Activated CD8-positive, alpha-beta T cell treated with anti-CD3 and anti-CD28 coated beads, Interleukin-2, amount 10 ng/mL, durations not matched to agents 7 days and 5 days (primary cell): ENCODE measurements at regions of chrX and their contacts with region 1.

Region 1: GRCh38 chrX:71365876-71366673 is at the start of gene TAF1:
- DNase-seq: peak; percentile 95
- ATAC-seq: peak; percentile 93
- H3K4me3 Mint-ChIP-seq: peak within 1 kb of the TSS; percentile 97
- H3K27ac Mint-ChIP-seq: peak within 1 kb of the TSS; percentile 99
- H3K4me1 Mint-ChIP-seq: peaks cover 20% of the 10 kb centered on the region
- H3K27me3 Mint-ChIP-seq: no peaks in the 10 kb centered on the region
- total RNA-seq, gene TAF1: 35.0 to 43.6 TPM

Region 2: GRCh38 chrX:71254092-71254941 is 111.8 kb before region 1 on chrX and contains the start of gene ZMYM3:
- CTCF ChIA-PET with region 1: interaction called, 3 read pairs
- POLR2A ChIA-PET with region 1: interaction called, 16 read pairs
- DNase-seq: peak; percentile 87
- ATAC-seq: peak; percentile 92
- H3K4me3 Mint-ChIP-seq: peak within 1 kb of the TSS; percentile 92
- H3K27ac Mint-ChIP-seq: peak within 1 kb of the TSS; percentile 92
- H3K4me1 Mint-ChIP-seq: peaks cover 34% of the 10 kb centered on the region
- H3K27me3 Mint-ChIP-seq: no peaks in the 10 kb centered on the region
- total RNA-seq, gene ZMYM3: 31.9 to 33.4 TPM

Region 3: DNA sequence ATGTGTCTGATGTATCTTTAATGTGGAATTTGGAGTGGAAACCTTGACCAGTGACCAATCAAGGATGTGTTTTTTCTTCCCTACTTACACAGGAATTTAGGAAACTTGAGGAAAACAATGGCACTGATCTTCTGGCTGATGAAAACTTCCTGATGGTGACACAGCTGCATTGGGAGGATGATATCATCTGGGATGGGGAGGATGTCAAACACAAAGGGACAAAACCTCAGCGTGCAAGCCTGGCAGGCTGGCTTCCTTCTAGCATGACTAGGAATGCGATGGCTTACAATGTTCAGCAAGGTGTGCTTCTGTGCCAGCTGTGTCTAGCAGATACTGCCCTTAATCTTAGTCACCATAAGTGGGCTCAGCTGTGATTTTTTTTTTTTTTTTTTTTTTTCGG is 12.7 kb after region 1 on chrX:
- CTCF ChIA-PET with region 1: no interaction called
- POLR2A ChIA-PET with region 1: no interaction called
- DNase-seq: no peak
- ATAC-seq: no peak
- H3K4me3 Mint-ChIP-seq: no peak overlapping the region
- H3K27ac Mint-ChIP-seq: no peak overlapping the region
- H3K4me1 Mint-ChIP-seq: no peaks in the 10 kb centered on the region
- H3K27me3 Mint-ChIP-seq: no peaks in the 10 kb centered on the region